Endothelial cell of umbilical vein (primary cell): ENCODE measurements at regions of chr2 and their contacts with region 1.

Region 1: DNA sequence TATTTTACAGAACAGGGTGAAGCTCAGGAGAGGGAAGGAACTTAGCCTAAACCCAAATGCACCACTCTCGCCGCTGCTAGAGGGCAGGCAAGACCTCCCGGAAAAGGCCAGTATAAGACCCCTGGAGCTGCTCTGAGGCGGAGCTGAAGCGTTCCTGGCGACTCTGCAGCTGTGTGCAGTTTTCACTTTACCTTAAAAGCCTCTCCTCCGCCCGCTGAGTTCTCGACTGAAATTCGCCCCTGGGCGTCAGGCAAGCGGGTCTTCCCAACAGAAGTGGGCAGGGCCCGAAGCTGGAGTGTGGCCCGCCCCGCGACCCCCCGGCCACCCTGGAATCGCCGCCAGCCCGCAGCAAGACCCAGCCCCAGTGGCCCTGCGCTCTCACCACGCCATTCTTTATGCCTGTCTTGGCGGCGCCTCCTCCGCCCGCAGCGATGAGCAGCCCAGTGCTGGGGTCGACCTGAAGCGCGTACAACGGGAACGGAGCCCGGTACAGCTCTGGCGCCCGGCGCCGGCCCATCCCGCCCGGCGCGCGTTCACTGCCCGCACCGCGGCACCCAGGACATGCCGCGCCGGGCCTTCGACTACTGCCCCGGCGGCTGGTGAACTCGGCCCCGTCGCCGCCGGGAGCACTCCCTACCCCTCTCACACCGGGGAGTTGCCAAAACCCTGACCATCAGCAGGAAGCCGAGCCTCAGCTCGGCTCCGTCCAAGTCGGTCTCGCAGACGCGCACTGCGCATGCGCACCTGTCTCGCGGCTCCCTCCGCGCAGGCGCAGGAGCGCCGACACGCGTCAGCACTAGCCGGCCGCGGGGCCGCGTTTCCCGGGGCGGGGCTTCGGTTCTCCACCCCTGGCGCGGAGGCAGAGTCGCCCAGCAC is at the start of gene PREB:
- DNase-seq: peak; percentile 97
- H3K4me3 ChIP-seq: peak within 1 kb of the TSS; percentile 78 to 97 (median 84)
- H3K27ac ChIP-seq: peak within 1 kb of the TSS; percentile 72
- H3K4me1 ChIP-seq: peaks cover 10% of the 10 kb centered on the region
- H3K27me3 ChIP-seq: no peaks in the 10 kb centered on the region
- CTCF ChIP-seq: peak; percentile 13 to 48
- POLR2A ChIP-seq: peak; percentile 90
- total RNA-seq, gene PREB: 45.6 and 47.2 TPM in 2 replicates

Region 2: GRCh38 chr2:27050281-27050995 is 83.7 kb before region 1 on chr2:
- CTCF ChIA-PET with region 1: interaction called, 6 read pairs
- POLR2A ChIA-PET with region 1: interaction called, 3 read pairs
- dilution Hi-C with region 1: no loop called
- intact Hi-C with region 1: loop called (anchors 1 kb)
- DNase-seq: peak; percentile 98
- H3K4me3 ChIP-seq: peak overlapping the region; percentile 66 to 76 (median 73)
- H3K27ac ChIP-seq: peak overlapping the region; percentile 60
- H3K4me1 ChIP-seq: peaks cover 12% of the 10 kb centered on the region
- H3K27me3 ChIP-seq: no peaks in the 10 kb centered on the region
- CTCF ChIP-seq: peak; percentile 18 to 52
- POLR2A ChIP-seq: peak; percentile 96

Region 3: GRCh38 chr2:27123302-27124231 is 10.6 kb before region 1 on chr2 and contains the start of gene ABHD1:
- CTCF ChIA-PET with region 1: interaction called, 9 read pairs
- POLR2A ChIA-PET with region 1: interaction called, 7 read pairs
- dilution Hi-C with region 1: no loop called
- intact Hi-C with region 1: loop called (anchors 1 kb)
- DNase-seq: peak; percentile 48
- H3K4me3 ChIP-seq: peak within 1 kb of the TSS in 2 of 3 experiments; percentile 16 to 58
- H3K27ac ChIP-seq: no peak within 1 kb of the TSS
- H3K4me1 ChIP-seq: no peaks in the 10 kb centered on the region
- H3K27me3 ChIP-seq: peaks cover 8 to 20% of the 10 kb centered on the region in 2 experiments
- CTCF ChIP-seq: no peak
- POLR2A ChIP-seq: peak; percentile 31
- total RNA-seq, gene ABHD1: not detected in 2 replicates

Region 4: GRCh38 chr2:27174316-27175040 is 40.3 kb after region 1 on chr2:
- CTCF ChIA-PET with region 1: interaction called, 10 read pairs
- POLR2A ChIA-PET with region 1: no interaction called
- dilution Hi-C with region 1: no loop called
- intact Hi-C with region 1: no loop called
- DNase-seq: no peak
- H3K4me3 ChIP-seq: no peak overlapping the region
- H3K27ac ChIP-seq: no peak overlapping the region
- H3K4me1 ChIP-seq: no peaks in the 10 kb centered on the region
- H3K27me3 ChIP-seq: peaks cover 30 to 34% of the 10 kb centered on the region in 2 experiments
- CTCF ChIP-seq: no peak
- POLR2A ChIP-seq: no peak

Region 5: DNA sequence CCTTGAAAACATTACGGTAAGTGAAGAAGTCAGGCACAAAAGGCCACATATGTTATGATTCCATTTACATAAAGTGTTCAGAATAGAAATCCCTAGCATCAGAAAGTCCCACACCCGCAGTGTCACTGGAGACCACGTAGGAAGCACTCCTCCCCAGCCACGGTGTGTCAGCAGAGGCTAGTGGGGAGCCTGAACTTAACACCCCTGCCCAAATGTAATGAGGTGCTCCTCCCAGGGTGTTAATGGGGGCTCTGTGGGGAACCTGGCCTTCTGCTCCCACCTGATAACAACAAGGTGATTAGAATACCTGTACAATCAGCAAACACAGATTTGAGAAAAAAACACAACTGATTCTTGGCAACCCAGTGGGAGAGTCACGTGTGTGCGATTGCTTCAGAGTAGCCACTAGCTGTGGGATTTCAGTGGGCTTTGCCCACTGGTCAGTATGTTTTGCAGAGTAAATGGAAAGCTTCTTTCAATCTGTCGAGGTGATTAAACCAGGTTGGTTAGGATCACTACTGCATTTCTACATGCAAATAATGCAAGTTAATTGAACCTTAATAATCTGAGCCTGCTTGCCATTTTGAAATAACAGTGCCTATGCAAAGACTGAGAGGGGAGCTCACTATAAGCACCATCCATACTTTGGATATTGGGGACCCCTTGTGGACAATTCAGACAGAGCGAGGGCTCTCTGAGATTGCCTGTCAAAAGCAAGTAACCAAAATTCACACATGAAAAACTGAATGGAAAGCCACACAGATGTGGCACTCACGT is 57.1 kb after region 1 on chr2:
- CTCF ChIA-PET with region 1: interaction called, 12 read pairs
- POLR2A ChIA-PET with region 1: no interaction called
- dilution Hi-C with region 1: no loop called
- intact Hi-C with region 1: no loop called
- DNase-seq: peak; percentile 73
- H3K4me3 ChIP-seq: no peak overlapping the region
- H3K27ac ChIP-seq: no peak overlapping the region
- H3K4me1 ChIP-seq: no peaks in the 10 kb centered on the region
- H3K27me3 ChIP-seq: peaks cover 2 to 3% of the 10 kb centered on the region in 2 experiments
- CTCF ChIP-seq: peak; percentile 48 to 65
- POLR2A ChIP-seq: no peak

Region 6: DNA sequence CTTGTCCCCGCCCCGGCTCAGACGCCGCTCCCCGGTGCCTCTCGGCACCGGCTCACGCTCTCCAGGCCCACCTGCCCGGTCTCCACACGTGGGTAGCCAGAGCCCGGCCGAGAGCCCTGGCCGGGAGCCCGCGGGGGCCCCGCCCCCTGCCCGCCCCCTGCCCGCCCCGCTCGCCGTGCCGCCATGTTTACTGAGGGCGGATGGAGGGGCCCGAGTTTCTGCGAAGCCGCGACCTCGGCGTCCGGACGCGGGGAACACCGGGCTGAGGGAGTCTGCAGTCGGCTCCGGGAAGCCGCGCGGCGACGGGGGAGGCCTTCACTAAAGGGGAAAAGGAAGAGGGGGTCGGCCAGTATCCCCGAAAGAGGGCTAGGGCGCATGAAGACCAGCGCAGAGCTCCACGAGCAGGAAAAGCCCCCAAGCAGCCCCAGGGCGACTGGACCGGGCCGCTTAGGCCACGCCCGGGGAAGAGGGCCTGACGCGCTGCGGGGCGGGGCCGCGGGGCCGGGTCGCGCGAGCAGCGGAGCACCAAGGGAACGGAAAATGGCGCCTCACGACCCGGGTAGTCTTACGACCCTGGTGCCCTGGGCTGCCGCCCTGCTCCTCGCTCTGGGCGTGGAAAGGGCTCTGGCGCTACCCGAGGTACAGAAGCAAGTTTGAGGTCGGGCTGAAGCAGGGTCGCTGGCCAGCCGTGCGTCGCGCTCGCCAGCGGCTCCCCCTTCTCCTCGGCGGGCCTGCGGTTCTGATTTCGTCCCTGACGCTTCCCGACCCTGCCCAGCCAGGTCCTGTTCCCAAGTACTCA is 77.9 kb after region 1 on chr2 and contains the starts of genes ATRAID and SLC5A6:
- CTCF ChIA-PET with region 1: no interaction called
- POLR2A ChIA-PET with region 1: no interaction called
- dilution Hi-C with region 1: no loop called
- intact Hi-C with region 1: loop called (anchors 1 kb)
- DNase-seq: peak; percentile 92
- H3K4me3 ChIP-seq: peak within 1 kb of the TSS; percentile 68 to 91 (median 88)
- H3K27ac ChIP-seq: peak within 1 kb of the TSS; percentile 89
- H3K4me1 ChIP-seq: peaks cover 17% of the 10 kb centered on the region
- H3K27me3 ChIP-seq: no peaks in the 10 kb centered on the region
- CTCF ChIP-seq: no peak
- POLR2A ChIP-seq: peak; percentile 98
- total RNA-seq, gene ATRAID: 84.3 and 86.6 TPM in 2 replicates
- total RNA-seq, gene SLC5A6: 42.7 and 52.0 TPM in 2 replicates